Activated CD4-positive, alpha-beta T cell treated with anti-CD3 and anti-CD28 coated beads for 36 hours (primary cell): ENCODE measurements at regions of chr16 and their contacts with region 1.

Region 1: GRCh38 chr16:67028555-67029248 is at the start of gene CBFB:
- DNase-seq: peak; percentile 95
- ATAC-seq: peak; percentile 90
- H3K4me3 Mint-ChIP-seq: peak within 1 kb of the TSS; percentile 87
- H3K27ac Mint-ChIP-seq: peak within 1 kb of the TSS; percentile 90
- H3K4me1 Mint-ChIP-seq: peaks cover 34% of the 10 kb centered on the region
- H3K27me3 Mint-ChIP-seq: no peaks in the 10 kb centered on the region
- total RNA-seq, gene CBFB: 84.6 to 90.2 TPM

Region 2: DNA sequence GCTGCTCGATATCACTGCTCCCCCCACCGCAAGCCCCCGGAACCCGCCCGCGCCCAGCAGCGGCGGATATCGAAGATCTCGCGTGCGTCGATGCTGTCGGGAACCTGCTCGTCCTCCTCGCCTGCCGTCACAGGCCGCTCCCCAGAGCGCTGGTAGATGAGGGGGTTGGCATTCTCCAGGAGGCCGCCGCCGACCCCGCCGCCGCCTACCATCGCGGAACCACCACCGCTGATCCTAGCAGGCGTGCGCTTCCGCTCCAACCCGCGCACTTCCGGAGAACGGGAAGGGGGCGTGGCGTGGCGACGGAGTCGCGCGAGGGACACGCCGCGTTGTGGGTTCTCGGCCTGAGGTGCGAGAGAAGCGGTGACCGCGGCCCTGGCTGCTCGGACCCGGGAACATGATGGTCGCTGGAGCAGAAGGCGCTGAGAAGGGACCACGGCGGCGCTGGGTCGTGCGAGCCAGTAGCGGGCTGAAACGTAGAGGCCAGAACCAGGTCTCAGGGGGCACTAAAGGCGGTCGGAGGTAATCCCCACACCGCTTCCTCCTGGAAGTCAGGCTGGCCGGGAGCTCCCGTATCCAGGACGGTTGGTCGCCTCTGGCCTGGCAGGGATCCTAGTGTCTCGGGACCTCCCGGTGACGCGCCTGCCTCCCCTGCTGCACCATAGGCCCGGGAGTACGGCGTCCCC is 94.4 kb before region 1 on chr16 and contains the start of gene CIAO2B:
- CTCF ChIA-PET with region 1: no interaction called
- POLR2A ChIA-PET with region 1: interaction called, 4 read pairs
- intact Hi-C with region 1: loop called in 1 of 2 experiments (anchors 1 kb)
- DNase-seq: peak; percentile 93
- ATAC-seq: peak; percentile 84
- H3K4me3 Mint-ChIP-seq: peak within 1 kb of the TSS; percentile 99
- H3K27ac Mint-ChIP-seq: peak within 1 kb of the TSS; percentile 96
- H3K4me1 Mint-ChIP-seq: peaks cover 57% of the 10 kb centered on the region
- H3K27me3 Mint-ChIP-seq: no peaks in the 10 kb centered on the region
- total RNA-seq, gene CIAO2B: 171 to 186 TPM

Region 3: DNA sequence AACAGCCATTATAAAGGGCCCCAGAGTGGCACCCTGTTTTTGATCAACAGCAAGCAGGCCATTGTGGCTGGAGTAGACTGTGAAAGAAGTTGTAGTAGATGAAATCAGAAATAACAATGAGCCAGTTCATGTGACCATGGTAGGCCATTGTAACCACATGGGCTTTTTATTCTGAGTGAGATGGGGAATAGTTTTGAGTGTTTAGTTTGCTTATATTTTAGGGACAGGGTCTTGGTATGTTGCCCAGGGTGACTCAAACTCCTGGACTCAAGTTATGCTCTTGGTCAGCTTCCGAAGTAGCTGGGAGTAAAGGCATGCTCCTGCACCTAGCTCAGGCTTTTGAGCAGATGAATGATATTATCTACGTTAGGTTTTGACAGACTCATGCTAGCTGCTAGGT is 12.2 kb after region 1 on chr16:
- CTCF ChIA-PET with region 1: interaction called, 12 read pairs
- POLR2A ChIA-PET with region 1: interaction called, 4 read pairs
- intact Hi-C with region 1: no loop called
- DNase-seq: no peak
- ATAC-seq: no peak
- H3K4me3 Mint-ChIP-seq: no peak overlapping the region
- H3K27ac Mint-ChIP-seq: peak overlapping the region; percentile 60
- H3K4me1 Mint-ChIP-seq: peaks cover 35% of the 10 kb centered on the region
- H3K27me3 Mint-ChIP-seq: no peaks in the 10 kb centered on the region

Region 4: GRCh38 chr16:67104061-67104460 is 75.4 kb after region 1 on chr16:
- CTCF ChIA-PET with region 1: interaction called, 11 read pairs
- POLR2A ChIA-PET with region 1: no interaction called
- intact Hi-C with region 1: loop called in 1 of 2 experiments (anchors 1 kb)
- DNase-seq: peak; percentile 16
- ATAC-seq: peak; percentile 42
- H3K4me3 Mint-ChIP-seq: no peak overlapping the region
- H3K27ac Mint-ChIP-seq: no peak overlapping the region
- H3K4me1 Mint-ChIP-seq: peaks cover 5% of the 10 kb centered on the region
- H3K27me3 Mint-ChIP-seq: no peaks in the 10 kb centered on the region

Region 5: DNA sequence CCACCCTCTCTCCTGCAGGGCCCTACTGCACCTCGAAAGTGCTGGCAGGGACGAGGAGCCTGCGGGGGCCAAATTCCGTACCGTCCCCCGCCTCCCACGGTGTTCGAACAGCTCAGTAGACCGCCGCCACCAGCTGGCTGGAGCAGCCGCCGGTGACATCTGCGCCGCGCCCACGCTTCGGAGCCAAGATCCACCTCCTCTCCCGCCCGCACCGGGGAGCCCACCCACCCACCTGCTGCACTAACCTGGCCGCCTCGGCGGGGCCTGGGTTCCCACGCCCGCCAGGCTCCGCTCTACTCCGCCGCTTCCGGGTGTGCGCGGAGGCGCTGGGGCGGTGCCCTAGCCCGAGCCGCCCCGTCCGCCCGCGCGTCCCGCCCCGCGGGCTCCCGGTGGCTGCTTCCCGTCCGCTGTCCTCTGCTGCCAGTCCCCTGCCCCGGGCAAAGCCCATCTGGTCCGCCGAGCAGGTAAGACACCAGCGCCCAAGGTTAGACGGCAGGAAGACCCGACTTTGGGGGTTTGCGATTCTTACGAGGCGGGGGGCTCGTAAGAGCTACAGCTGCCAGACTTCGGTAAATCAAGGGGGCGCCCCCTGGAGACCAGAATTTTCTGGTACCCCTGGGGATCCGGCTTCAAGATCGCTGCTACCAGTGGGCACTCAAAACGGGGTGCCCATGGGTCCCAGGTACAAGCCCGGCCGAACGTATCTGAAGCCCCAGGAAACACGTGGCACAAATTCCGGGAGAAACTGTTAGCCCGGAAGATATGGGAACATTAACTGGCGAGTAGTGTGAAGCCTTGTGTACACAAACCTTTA is 131.1 kb after region 1 on chr16 and contains the starts of genes FBXL8 and TRADD:
- CTCF ChIA-PET with region 1: interaction called, 12 read pairs
- POLR2A ChIA-PET with region 1: no interaction called
- intact Hi-C with region 1: loop called in 1 of 2 experiments (anchors 1 kb)
- DNase-seq: peak; percentile 88
- ATAC-seq: peak; percentile 63
- H3K4me3 Mint-ChIP-seq: peak within 1 kb of the TSS; percentile 91
- H3K27ac Mint-ChIP-seq: peak within 1 kb of the TSS; percentile 93
- H3K4me1 Mint-ChIP-seq: peaks cover 48% of the 10 kb centered on the region
- H3K27me3 Mint-ChIP-seq: peaks cover 12% of the 10 kb centered on the region
- total RNA-seq, gene FBXL8: 15.5 to 21.0 TPM
- total RNA-seq, gene TRADD: 22.0 to 34.0 TPM

Region 6: DNA sequence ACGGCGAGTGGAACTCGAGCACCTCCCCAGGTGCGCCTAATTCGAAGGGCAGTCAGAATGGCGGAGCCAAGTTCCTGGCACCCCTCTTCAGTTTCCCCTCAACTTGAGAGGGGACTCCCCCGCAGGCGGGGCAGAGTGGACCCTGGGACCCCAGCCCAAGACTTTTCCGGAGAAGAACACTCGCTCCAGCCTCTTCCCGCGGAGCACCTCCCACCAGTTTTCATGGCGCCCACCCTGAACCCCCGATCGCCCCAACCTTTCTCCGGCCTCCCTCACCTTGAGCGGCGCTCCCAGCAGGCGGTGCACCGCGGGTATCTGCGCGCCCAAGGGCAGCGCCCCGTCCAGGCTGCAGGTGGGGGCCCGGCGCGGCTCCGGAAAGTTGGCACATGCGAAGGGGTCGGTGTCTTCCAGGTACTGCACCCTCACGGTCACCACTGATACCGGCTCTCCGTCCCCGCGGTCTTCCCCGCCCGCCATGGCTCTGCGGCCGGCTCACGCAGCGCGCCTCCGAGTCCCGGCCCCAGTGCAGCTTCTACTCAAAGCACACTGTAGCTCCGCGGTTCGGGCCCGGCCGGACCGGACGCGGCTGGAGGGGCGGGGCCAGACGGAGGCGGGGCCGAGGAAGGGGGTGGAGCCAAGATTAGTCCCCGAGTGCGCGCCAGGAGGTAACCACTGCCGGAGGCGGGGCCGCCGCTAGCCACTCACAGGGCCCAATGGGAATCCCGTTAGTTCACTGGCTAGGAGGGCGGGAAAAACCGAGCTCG is 218.4 kb after region 1 on chr16 and contains the start of gene FHOD1:
- CTCF ChIA-PET with region 1: no interaction called
- POLR2A ChIA-PET with region 1: no interaction called
- intact Hi-C with region 1: loop called in 1 of 2 experiments (anchors 1 kb)
- DNase-seq: peak; percentile 99
- ATAC-seq: peak; percentile 74
- H3K4me3 Mint-ChIP-seq: peak within 1 kb of the TSS; percentile 87
- H3K27ac Mint-ChIP-seq: peak within 1 kb of the TSS; percentile 85
- H3K4me1 Mint-ChIP-seq: peaks cover 52% of the 10 kb centered on the region
- H3K27me3 Mint-ChIP-seq: peaks cover 11% of the 10 kb centered on the region
- total RNA-seq, gene FHOD1: 75.5 to 77.2 TPM

Region 7: DNA sequence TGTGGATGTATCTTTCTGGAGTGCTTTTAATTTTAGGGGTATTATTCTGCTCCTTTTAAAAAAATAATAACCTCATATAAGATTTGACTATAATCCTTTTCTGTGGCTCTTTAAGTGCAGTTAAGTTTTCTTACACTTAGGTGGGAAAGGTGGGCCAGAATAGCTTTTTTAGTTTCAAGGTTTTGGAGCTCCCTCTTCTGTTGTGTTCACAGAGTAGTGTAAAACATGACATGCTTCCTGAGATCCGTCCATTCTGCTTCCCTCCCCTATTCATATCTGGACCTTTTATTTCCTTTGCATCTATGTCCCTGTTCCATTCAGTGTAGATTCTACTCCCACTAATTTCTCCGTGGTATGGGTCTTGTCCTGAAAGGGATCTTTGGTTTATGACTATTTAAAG is 310.8 kb after region 1 on chr16:
- CTCF ChIA-PET with region 1: no interaction called
- POLR2A ChIA-PET with region 1: no interaction called
- intact Hi-C with region 1: no loop called
- DNase-seq: no peak
- ATAC-seq: no peak
- H3K4me3 Mint-ChIP-seq: no peak overlapping the region
- H3K27ac Mint-ChIP-seq: no peak overlapping the region
- H3K4me1 Mint-ChIP-seq: no peaks in the 10 kb centered on the region
- H3K27me3 Mint-ChIP-seq: peaks cover 3% of the 10 kb centered on the region

Region 8: GRCh38 chr16:67489401-67490083 is 460.8 kb after region 1 on chr16:
- CTCF ChIA-PET with region 1: no interaction called
- POLR2A ChIA-PET with region 1: no interaction called
- intact Hi-C with region 1: no loop called
- DNase-seq: no peak
- ATAC-seq: no peak
- H3K4me3 Mint-ChIP-seq: no peak overlapping the region
- H3K27ac Mint-ChIP-seq: peak overlapping the region; percentile 60
- H3K4me1 Mint-ChIP-seq: peaks cover 10% of the 10 kb centered on the region
- H3K27me3 Mint-ChIP-seq: no peaks in the 10 kb centered on the region

Region 9: GRCh38 chr16:67857502-67858233 is 829.0 kb after region 1 on chr16:
- CTCF ChIA-PET with region 1: no interaction called
- POLR2A ChIA-PET with region 1: no interaction called
- intact Hi-C with region 1: no loop called
- DNase-seq: peak; percentile 55
- ATAC-seq: peak; percentile 91
- H3K4me3 Mint-ChIP-seq: no peak overlapping the region
- H3K27ac Mint-ChIP-seq: peak overlapping the region; percentile 40
- H3K4me1 Mint-ChIP-seq: peaks cover 32% of the 10 kb centered on the region
- H3K27me3 Mint-ChIP-seq: no peaks in the 10 kb centered on the region